Naive thymus-derived CD8-positive, alpha-beta T cell (primary cell): ENCODE measurements at regions of chr17 and their contacts with region 1.

Region 1: GRCh38 chr17:8248751-8249607 is at the start of gene PFAS:
- DNase-seq: peak; percentile 91 to 97 (median 95)
- ATAC-seq: peak; percentile 43 to 60
- H3K4me3 Mint-ChIP-seq: peak within 1 kb of the TSS; percentile 95 to 100 (median 100)
- H3K27ac Mint-ChIP-seq: peak within 1 kb of the TSS; percentile 99 to 100 (median 100)
- H3K4me1 Mint-ChIP-seq: peaks cover 32 to 56% (median 49%) of the 10 kb centered on the region in 4 donors
- H3K27me3 Mint-ChIP-seq: no peaks in the 10 kb centered on the region
- polyA plus RNA-seq, gene PFAS: 10.1 to 20.9 (median 19.8) TPM

Region 2: GRCh38 chr17:8138672-8139371 is 110.2 kb before region 1 on chr17:
- POLR2A ChIA-PET with region 1: interaction called, 13 read pairs
- DNase-seq: peak; percentile 87 to 99 (median 97)
- ATAC-seq: peak; percentile 86 to 87
- H3K4me3 Mint-ChIP-seq: no peak overlapping the region
- H3K27ac Mint-ChIP-seq: no peak overlapping the region
- H3K4me1 Mint-ChIP-seq: peaks cover 0 to 18% (median 7%) of the 10 kb centered on the region in 4 donors
- H3K27me3 Mint-ChIP-seq: peaks cover 0 to 5% (median 0%) of the 10 kb centered on the region in 5 donors

Region 3: GRCh38 chr17:8162233-8162996 is 86.6 kb before region 1 on chr17 and contains the start of gene VAMP2:
- POLR2A ChIA-PET with region 1: interaction called, 14 read pairs
- DNase-seq: peak; percentile 75 to 92 (median 87)
- ATAC-seq: peak; percentile 61 to 66
- H3K4me3 Mint-ChIP-seq: peak within 1 kb of the TSS; percentile 86 to 96 (median 90)
- H3K27ac Mint-ChIP-seq: peak within 1 kb of the TSS; percentile 95 to 99 (median 98)
- H3K4me1 Mint-ChIP-seq: peaks cover 31 to 65% (median 64%) of the 10 kb centered on the region in 4 donors
- H3K27me3 Mint-ChIP-seq: no peaks in the 10 kb centered on the region
- polyA plus RNA-seq, gene VAMP2: 50.4 to 84.2 (median 64.4) TPM

Region 4: DNA sequence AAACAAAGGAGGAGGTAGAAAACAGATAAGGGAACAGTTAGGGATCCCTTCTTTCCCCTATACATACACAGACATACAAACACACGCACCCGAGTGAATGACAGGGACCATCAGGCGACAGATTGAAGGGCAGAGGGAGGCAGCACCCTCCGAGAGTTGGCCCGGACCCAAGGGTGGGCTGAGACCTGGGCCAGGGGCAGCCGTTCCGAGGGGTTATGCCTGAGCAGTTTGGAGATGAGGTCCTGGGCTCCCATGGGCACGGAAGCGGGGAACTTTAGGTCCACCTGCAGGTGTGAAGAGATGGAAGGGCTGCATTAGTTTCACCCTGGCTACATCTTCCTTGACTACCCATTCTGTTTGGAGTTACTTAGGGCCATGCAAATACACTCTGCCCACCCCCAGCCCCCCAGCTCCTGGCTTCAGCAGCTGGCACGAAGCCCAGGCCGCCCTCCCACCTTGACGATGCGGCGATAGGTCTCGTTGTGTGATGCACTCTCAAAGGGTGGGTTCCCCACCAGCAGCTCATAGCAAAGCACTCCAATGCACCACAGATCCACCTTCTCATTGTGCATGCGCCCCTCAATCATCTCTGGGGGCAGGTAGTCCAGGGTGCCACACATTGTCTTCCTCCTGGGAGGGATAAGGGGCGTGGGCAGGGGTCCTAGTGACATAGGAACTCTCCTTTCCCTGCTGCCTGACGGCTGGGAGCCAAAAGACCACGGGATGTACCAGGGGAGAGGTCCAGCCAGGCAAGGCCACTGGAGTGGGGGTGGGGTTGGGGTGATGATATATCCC is 44.0 kb before region 1 on chr17:
- POLR2A ChIA-PET with region 1: interaction called, 14 read pairs
- DNase-seq: no peak
- ATAC-seq: no peak
- H3K4me3 Mint-ChIP-seq: no peak overlapping the region
- H3K27ac Mint-ChIP-seq: peak overlapping the region in 2 of 10 donors; percentile 22 to 32
- H3K4me1 Mint-ChIP-seq: peaks cover 5 to 9% (median 7%) of the 10 kb centered on the region in 4 donors
- H3K27me3 Mint-ChIP-seq: peaks cover 0 to 2% (median 0%) of the 10 kb centered on the region in 5 donors

Region 5: DNA sequence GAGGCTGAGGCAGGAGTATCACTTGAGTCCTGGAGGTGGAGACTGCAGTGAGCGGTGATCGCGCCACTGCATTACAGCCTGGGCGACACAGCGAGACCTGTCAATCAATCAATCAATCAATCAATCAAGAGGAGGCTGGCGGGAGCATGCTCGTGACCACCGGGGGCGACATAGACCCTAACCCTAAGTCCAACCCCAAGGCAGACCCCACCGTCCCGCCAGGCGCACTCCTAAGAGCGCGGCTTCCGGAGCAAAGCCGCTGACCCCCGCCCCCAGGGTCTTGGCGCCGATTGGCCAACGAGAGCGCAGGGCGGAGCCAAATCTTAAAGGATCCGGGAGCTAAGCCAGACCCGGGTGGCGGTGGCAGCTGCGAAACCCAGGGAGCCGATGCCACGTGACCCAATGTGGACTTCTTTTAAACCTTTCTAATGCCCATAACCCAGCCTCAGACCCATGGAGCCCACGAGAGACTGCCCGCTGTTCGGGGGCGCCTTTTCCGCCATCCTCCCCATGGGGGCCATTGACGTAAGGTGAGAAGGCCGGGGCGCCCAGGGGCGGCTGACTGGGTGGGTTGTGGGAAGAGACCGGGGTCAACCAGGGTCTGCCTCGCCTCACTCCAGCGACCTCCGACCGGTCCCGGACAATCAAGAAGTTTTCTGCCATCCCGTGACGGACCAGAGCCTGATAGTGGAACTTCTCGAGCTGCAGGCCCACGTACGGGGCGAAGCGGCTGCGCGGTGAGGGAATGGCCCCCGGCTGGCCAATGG is 39.5 kb after region 1 on chr17 and contains the start of gene RANGRF:
- POLR2A ChIA-PET with region 1: interaction called, 36 read pairs
- DNase-seq: peak; percentile 61 to 87 (median 74)
- ATAC-seq: peak; percentile 94 to 96
- H3K4me3 Mint-ChIP-seq: peak within 1 kb of the TSS; percentile 93 to 99 (median 96)
- H3K27ac Mint-ChIP-seq: peak within 1 kb of the TSS; percentile 89 to 99 (median 96)
- H3K4me1 Mint-ChIP-seq: peaks cover 15 to 58% (median 35%) of the 10 kb centered on the region in 4 donors
- H3K27me3 Mint-ChIP-seq: no peaks in the 10 kb centered on the region
- polyA plus RNA-seq, gene RANGRF: 67.2 to 79.6 (median 78.7) TPM